Activated naive CD4-positive, alpha-beta T cell treated with anti-CD3 and anti-CD28 coated beads, Interleukin-2, amount 10 ng/mL, durations not matched to agents 7 days and 5 days (primary cell): ENCODE measurements at regions of chr1 and their contacts with region 1.

Region 1: DNA sequence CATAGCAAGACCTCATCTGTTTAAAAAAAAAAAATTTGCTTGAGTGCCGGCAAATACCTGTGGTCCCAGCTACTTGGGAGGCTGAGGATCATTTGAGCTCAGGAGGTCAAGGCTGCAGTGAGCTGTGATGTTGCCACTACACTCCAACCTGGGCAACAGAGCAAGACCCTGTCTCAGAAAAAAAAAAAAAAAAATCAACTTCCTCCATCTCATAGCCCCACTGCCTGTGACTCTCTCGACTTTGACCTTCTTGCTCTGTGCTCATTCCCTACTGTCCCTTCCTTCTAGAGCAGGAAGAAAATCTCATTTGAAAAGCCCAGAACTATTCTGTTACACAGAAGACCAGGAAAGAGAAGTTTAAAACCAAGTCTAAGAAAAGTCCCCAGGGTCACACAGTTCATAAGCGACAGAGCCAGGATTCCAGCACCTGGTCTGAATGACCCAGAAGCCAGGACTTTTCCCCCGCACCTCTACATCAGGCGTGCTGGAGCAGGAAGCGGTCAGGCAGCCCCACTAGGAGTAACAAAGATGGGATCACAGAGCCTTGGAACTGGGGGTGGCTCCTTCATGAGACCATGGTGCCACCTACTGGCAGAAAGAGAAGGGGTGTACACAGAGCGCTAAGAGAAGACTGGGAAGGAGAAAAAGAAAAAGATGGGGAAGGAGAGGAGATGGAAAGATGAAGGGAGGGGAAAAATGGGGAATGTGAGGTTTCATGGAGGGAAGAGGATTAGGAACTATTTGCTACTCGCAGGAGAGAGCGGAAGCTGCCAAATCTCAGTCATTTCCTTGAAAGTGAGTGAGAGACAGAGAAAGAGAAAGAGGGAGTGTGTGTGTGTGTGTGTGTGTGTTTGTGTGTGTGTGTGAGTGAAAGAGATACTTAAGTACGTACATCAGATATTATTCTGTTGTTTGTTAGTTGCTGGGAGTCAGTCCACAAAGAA is 3.1 kb upstream of the P3R3URF start:
- DNase-seq: peak; percentile 78
- H3K4me3 Mint-ChIP-seq: no peak overlapping the region
- H3K27ac Mint-ChIP-seq: no peak overlapping the region
- H3K4me1 Mint-ChIP-seq: peaks cover 7% of the 10 kb centered on the region
- H3K27me3 Mint-ChIP-seq: no peaks in the 10 kb centered on the region

Region 2: GRCh38 chr1:46036894-46037839 is 142.2 kb before region 1 on chr1:
- CTCF ChIA-PET with region 1: interaction called, 46 read pairs
- DNase-seq: peak; percentile 87
- H3K4me3 Mint-ChIP-seq: no peak overlapping the region
- H3K27ac Mint-ChIP-seq: no peak overlapping the region
- H3K4me1 Mint-ChIP-seq: no peaks in the 10 kb centered on the region
- H3K27me3 Mint-ChIP-seq: no peaks in the 10 kb centered on the region

Region 3: GRCh38 chr1:46102769-46103476 is 76.5 kb before region 1 on chr1:
- CTCF ChIA-PET with region 1: no interaction called
- DNase-seq: no peak
- H3K4me3 Mint-ChIP-seq: no peak overlapping the region
- H3K27ac Mint-ChIP-seq: no peak overlapping the region
- H3K4me1 Mint-ChIP-seq: no peaks in the 10 kb centered on the region
- H3K27me3 Mint-ChIP-seq: peaks cover 14% of the 10 kb centered on the region

Region 4: GRCh38 chr1:46166521-46167462 is 12.6 kb before region 1 on chr1:
- CTCF ChIA-PET with region 1: interaction called, 11 read pairs
- DNase-seq: peak; percentile 71
- H3K4me3 Mint-ChIP-seq: peak overlapping the region; percentile 75
- H3K27ac Mint-ChIP-seq: peak overlapping the region; percentile 87
- H3K4me1 Mint-ChIP-seq: peaks cover 19% of the 10 kb centered on the region
- H3K27me3 Mint-ChIP-seq: peaks cover 70% of the 10 kb centered on the region

Region 5: DNA sequence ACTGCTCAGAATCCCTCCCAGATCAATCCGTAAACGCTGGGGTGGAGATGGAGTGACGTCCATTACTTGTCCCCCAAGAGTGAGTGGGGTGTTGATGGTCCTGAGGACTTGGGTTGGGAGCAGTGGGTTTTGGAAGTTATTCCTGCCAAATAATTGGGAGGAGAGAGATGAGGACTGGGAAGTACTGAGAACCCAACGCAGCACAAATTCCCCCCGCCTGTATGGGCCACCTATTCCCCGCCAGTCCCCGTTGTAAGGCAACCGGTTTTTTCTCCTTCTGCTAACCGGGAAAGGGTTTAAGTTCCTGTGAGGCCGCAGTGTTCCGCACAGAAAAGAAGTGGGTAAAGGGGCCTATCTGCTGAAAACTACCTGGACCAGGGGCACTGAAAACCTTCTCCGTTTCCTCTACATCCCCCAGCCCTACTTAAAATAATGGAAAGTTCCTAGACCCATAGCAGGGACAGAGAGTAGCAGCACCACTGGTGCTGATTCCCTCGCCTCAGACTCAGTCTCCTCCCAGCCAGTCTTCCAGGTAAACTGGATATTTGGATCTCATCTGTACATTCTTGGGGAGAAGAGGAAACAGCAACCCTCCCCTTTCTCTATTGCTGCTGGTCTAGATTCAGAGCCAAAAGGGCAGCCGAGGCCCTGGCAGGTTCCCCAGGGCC is 24.5 kb after region 1 on chr1:
- CTCF ChIA-PET with region 1: no interaction called
- DNase-seq: no peak
- H3K4me3 Mint-ChIP-seq: peak overlapping the region; percentile 64
- H3K27ac Mint-ChIP-seq: no peak overlapping the region
- H3K4me1 Mint-ChIP-seq: peaks cover 30% of the 10 kb centered on the region
- H3K27me3 Mint-ChIP-seq: peaks cover 13% of the 10 kb centered on the region

Region 6: GRCh38 chr1:46248122-46248920 is 68.9 kb after region 1 on chr1:
- CTCF ChIA-PET with region 1: no interaction called
- DNase-seq: peak; percentile 51
- H3K4me3 Mint-ChIP-seq: peak overlapping the region; percentile 96
- H3K27ac Mint-ChIP-seq: peak overlapping the region; percentile 88
- H3K4me1 Mint-ChIP-seq: peaks cover 47% of the 10 kb centered on the region
- H3K27me3 Mint-ChIP-seq: peaks cover 5% of the 10 kb centered on the region